ENCODE measurements at regions of chr15 and their contacts with region 1.

Region 1: DNA sequence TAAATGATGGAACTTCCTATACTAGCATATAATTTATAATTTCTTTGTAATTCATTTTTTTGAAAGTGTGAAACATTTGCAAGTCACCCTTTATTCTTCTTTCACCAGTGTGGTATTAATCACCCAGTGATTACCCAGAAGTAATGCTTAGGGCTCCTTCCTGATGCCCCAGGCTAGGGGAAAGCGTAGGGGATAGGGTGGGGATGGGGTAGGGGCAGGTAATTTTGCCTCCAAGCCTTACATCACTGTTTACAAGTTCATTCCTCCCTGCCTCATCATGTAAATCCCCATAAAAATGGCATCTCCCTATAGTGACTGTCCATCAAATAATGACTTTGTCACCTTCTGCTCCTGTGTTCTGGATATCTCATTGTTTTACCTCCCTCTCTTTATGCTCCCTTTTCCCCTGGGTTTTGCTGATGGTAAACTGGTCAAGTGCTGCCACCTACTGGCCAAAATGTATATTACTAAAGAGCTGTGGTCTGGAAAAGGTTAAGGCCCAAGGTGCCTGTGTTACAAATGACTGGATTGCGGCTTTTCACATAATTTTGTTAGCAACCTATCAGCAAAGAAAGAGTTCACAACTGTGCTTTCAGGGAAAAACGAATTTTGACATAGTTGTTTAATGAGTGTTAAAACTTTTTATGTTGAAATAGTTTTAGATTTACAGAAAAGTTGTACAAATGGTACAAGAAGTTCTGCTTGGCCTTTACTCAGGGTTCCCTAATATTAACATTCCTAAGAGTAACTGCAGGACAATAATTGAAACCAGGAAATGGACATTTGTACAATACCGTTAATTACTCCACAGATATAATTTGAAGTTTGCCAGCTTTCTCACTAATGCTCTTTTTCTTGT is 54.7 kb downstream of the ONECUT1 start:
- DNase-seq: peak in 1 of 2 donors; percentile 72
- H3K4me3 ChIP-seq: no peak overlapping the region
- CTCF ChIP-seq: peak in 1 of 3 donors; percentile 88
- POLR2A ChIP-seq: no peak

Region 2: GRCh38 chr15:52256366-52256765 is 479.1 kb before region 1 on chr15:
- intact Hi-C with region 1: loop called (anchors 10 kb)
- DNase-seq: peak; percentile 79 to 93
- H3K4me3 ChIP-seq: no peak overlapping the region
- CTCF ChIP-seq: peak in 1 of 3 donors; percentile 32
- POLR2A ChIP-seq: no peak

Region 3: DNA sequence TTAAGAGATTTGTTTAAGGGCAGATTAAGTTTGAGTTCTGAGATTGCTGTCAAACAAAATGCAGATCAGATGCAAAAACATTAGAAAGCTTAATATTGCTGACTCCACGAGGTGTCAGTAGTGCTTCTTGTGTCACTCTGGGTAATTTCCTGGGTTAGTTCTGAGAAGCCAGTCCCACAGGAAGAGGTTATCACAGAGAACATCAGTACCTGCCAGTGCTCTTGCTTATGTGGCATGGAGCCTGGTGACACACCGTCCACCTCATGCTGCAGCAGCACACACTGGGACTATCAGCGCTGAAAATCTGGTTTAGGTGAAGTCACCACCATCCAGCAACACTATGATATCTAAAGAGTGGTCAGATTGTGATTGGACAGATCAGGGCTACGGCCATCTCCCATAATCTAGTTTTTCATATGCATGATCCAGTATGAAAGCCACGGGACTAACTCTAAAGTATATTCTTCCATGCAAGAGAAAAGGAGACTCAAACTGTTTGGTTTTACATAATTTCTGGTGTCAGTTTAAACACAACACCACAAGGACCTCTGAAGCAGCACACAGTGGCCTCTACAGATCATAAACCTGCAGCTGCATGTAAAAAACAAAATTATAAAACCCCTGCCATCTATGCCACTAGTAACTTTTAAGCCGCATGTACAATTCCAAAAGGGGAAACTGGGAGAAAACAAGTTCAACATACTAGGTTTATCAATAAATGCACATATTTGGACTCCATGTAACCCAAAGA is 403.8 kb before region 1 on chr15:
- intact Hi-C with region 1: loop called (anchors 10 kb)
- DNase-seq: peak in 1 of 2 donors; percentile 27
- H3K4me3 ChIP-seq: no peak overlapping the region
- CTCF ChIP-seq: no peak
- POLR2A ChIP-seq: no peak

Region 4: DNA sequence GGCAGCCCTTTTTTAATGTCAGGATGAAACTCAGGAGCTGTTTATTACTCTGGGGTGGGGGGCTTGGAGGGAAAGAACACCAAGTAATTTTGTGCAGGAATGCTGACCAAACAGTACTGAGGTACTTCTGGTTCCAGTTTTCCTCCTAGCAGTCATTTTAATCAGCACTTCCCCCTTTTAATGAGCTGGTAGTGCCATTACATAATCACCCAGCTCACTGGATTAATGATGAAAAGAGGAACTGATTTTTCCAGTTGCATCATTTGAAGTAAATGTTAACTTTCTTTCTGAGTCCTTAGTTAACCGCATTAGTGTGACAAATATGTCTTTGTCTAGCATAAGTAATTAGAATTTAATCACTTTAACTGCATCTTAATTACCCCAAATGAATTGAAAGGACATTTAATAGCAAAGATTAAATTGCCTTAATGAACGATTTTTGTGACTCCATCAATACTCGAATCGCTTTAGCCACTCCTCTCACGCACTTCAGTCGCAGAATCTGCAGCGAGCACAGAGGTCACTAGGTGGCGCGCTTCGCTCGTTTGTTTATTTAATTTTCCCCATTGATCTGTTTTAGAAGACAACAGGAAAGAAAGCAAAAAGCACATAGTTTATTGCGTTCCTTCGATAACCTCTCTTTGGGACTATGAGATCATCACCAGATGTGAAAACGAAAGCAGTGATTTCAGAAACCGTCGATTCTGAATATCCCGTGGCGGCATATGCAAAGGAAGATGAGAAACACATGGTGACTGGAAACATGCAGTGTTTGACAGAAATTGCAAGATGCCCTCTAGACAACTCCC is 44.9 kb after region 1 on chr15:
- intact Hi-C with region 1: no loop called
- DNase-seq: peak in 1 of 2 donors; percentile 53
- H3K4me3 ChIP-seq: no peak overlapping the region
- CTCF ChIP-seq: no peak
- POLR2A ChIP-seq: no peak

Measured in lower leg skin (tissue), 4 donors.